H1 (cell line): ENCODE measurements at regions of chr11 and their contacts with region 1.

Region 1: GRCh38 chr11:8018484-8019313 is 31.6 kb downstream of the EIF3F start:
- DNase-seq: peak in 1 of 2 experiments; percentile 87
- H3K4me3 ChIP-seq: peak overlapping the region; percentile 56 to 68 (median 61)
- H3K27ac ChIP-seq: no peak overlapping the region
- H3K4me1 ChIP-seq: peaks cover 6 to 17% (median 13%) of the 10 kb centered on the region in 4 experiments; a peak in 6 of 7 replicates
- H3K27me3 ChIP-seq: peaks cover 14 to 59% (median 52%) of the 10 kb centered on the region in 4 experiments
- CTCF ChIP-seq: no peak
- EP300 ChIP-seq: peak in 1 of 2 experiments; percentile 67; a peak in 1 of 3 replicates
- POLR2A ChIP-seq: no peak; a peak in 1 of 3 replicates
- RAD21 ChIP-seq: no peak

Region 2: DNA sequence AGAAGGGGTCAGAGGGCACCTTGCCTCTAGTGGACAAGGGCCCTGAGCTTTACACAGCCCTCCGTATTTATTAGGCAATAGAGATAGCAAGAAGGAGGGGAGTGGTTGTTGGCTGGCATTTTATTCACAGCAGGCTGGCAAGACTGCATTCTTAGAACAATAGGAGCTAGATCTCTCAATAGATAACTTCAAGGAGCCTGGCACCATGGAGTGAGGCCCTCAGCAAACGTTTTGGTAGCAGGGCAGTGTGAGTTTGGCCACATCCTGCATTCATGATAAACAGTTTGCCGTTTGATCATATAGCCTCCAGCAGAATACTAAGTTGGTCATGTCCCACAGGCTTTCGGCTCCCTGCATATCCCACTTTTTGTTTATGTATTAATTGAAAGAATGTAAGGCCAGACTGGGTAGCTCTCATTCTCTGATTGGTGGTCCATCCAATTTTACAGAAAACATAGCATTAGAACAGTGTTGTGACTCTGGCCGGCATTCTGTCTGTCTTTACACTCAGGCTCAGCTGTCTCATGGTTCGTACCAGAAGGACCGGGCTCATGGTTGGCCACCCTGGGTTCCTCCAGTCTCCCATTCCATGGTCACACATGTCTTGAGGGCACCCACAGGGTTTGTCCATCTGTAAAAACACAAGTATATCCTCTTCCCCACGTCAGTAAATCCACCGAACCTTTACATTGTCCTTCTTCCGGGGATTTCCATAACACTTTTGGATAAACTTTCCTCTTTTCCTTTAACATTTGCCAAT is 119.1 kb before region 1 on chr11:
- CTCF ChIA-PET with region 1: no interaction called
- POLR2A ChIA-PET with region 1: no interaction called
- DNase-seq: no peak
- H3K4me3 ChIP-seq: no peak overlapping the region
- H3K27ac ChIP-seq: no peak overlapping the region
- H3K4me1 ChIP-seq: peaks cover 0 to 6% (median 2%) of the 10 kb centered on the region in 4 experiments; a peak in 2 of 7 replicates
- H3K27me3 ChIP-seq: no peaks in the 10 kb centered on the region; a peak in 1 of 7 replicates
- CTCF ChIP-seq: no peak
- EP300 ChIP-seq: no peak
- POLR2A ChIP-seq: no peak; a peak in 1 of 3 replicates
- RAD21 ChIP-seq: no peak

Region 3: DNA sequence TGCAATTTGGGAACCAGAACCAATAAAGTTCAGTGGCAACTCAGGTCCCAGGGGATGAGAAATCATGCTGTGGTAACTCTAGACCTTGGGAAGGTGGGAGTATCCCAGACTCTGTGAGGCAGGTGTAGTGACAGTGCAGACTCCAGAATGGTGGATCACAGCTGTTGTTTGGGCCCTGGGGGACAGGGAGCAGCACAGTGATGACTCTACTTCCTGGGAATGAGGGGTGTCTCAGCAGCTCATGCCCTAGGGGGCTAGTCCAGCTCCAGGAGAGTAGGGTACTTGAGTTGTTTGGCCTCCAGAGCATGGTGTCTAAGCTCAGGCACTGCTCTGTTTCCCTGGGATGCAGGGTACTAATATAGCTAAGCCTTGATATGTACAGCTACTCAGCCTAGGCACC is 73.4 kb before region 1 on chr11:
- CTCF ChIA-PET with region 1: no interaction called
- POLR2A ChIA-PET with region 1: no interaction called
- DNase-seq: no peak
- H3K4me3 ChIP-seq: no peak overlapping the region
- H3K27ac ChIP-seq: no peak overlapping the region
- H3K4me1 ChIP-seq: no peaks in the 10 kb centered on the region
- H3K27me3 ChIP-seq: no peaks in the 10 kb centered on the region
- CTCF ChIP-seq: no peak
- EP300 ChIP-seq: no peak
- POLR2A ChIP-seq: no peak
- RAD21 ChIP-seq: no peak

Region 4: DNA sequence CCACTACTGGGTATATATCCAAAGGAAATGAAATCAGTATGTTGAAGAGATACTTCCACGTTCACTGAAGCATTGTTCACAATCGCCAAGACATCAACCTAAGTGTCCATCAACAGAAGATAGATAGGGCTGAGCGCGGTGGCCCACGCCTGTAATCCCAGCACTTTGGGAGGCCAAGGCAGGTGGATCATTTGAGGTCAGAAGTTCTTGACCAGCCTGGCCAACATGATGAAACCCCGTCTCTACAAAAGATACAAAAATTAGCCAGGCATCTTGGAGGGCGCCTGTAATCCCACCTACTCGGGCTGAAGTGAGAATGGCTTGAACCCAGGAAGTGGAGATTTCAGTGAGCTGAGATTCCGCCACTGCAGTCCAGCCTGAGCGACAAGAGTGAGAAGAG is 18.9 kb before region 1 on chr11:
- CTCF ChIA-PET with region 1: interaction called, 3 read pairs
- POLR2A ChIA-PET with region 1: interaction called, 10 read pairs
- DNase-seq: no peak
- H3K4me3 ChIP-seq: no peak overlapping the region
- H3K27ac ChIP-seq: no peak overlapping the region
- H3K4me1 ChIP-seq: no peaks in the 10 kb centered on the region
- H3K27me3 ChIP-seq: no peaks in the 10 kb centered on the region
- CTCF ChIP-seq: no peak
- EP300 ChIP-seq: no peak
- POLR2A ChIP-seq: no peak
- RAD21 ChIP-seq: no peak

Region 5: GRCh38 chr11:8056810-8057463 is 38.2 kb after region 1 on chr11:
- CTCF ChIA-PET with region 1: interaction called, 15 read pairs
- POLR2A ChIA-PET with region 1: no interaction called
- DNase-seq: peak in 1 of 2 experiments; percentile 36
- H3K4me3 ChIP-seq: no peak overlapping the region
- H3K27ac ChIP-seq: no peak overlapping the region
- H3K4me1 ChIP-seq: peaks cover 0 to 5% (median 0%) of the 10 kb centered on the region in 4 experiments; a peak in 2 of 7 replicates
- H3K27me3 ChIP-seq: no peaks in the 10 kb centered on the region
- CTCF ChIP-seq: no peak
- EP300 ChIP-seq: no peak
- POLR2A ChIP-seq: no peak
- RAD21 ChIP-seq: no peak

Region 6: DNA sequence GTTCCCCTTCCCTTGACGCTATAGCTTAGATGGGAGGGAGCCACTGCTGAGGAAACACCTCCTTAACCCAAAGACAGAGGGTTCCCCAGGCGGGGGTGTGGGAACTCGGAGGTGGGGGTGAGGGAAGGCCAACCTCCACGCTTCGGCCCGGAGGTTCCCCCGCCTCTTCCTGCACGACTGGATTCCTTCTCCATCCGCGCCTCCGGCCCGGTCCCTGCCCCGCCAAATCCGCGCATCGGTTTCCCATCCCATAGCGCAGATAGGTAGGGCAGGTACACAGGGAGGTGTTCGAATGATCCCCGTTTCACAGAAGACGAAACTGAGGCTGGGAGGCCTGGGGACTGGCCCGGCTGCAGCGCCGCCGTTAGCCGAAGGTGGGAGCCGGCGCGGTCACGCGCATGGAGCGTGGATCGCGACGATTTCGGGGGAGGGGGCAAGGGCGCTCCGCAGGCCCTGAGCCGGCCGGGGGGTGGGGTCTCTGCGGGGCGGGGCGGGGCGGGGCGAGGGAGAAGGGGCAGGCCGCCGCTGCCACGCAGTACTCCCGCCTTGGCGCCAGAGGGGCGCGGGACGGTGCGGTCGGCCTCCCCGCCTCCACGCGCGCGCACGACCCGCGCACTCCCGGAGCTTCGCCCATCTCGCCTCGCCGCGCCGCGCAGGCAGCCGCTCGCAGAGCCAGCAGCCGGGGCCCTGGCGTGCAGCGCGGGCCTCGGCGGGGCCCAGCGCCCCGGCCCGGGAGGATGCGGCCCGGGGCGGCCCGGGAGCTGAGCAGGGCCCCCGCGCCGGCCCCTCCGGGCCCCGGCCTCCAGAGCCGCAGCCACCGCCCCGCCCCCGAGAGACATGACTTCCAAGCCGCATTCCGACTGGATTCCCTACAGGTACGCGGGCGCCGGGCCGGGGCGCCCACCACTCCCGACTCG is 62.2 kb after region 1 on chr11 and contains the start of gene TUB:
- CTCF ChIA-PET with region 1: interaction called, 118 read pairs
- POLR2A ChIA-PET with region 1: interaction called, 6 read pairs
- DNase-seq: peak in 1 of 2 experiments; percentile 77
- H3K4me3 ChIP-seq: peak within 1 kb of the TSS; percentile 41 to 73 (median 51)
- H3K27ac ChIP-seq: no peak within 1 kb of the TSS
- H3K4me1 ChIP-seq: peaks cover 10 to 46% (median 31%) of the 10 kb centered on the region in 4 experiments
- H3K27me3 ChIP-seq: peaks cover 0 to 18% (median 13%) of the 10 kb centered on the region in 4 experiments; a peak in 5 of 7 replicates
- CTCF ChIP-seq: no peak
- EP300 ChIP-seq: no peak
- POLR2A ChIP-seq: no peak
- RAD21 ChIP-seq: no peak
- total RNA-seq, gene TUB: 29.9 and 31.3 TPM in 2 replicates